ENCODE measurements at regions of chr18 and their contacts with region 1.

Region 1: DNA sequence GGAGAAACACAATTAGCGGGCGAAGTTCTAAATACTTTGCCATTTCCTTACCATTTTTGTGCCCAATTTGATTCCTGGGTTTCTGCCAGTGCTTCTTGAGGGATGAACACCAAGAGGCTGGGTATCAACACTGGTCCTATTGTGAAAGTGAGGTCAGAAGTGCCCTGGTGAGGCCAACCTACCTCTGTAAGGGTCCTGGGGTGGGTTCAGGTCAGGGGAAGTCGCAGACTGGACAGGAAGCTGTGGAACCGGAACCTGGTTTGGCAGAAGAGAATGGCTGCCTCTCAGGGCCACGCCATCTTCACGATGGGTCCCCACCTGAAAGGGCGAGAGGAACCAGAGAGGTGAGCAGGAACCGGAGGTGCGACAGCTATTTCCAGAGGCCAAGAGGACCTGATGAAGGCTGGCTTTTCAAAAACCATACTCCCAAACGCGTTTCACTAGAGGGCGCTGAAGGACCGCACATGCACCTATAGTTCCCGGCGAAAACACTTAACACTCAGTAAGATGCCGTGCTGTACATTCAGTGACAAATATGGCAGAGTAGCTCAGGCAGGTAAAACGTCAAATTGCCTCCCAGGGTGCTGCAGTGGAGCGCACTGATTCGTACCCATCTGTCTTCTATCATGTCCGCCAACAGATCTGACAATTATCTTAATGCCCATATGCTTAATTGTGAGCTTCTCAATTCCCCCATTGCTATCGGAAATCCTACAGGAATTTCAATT is 275.3 kb upstream of the CCDC68 start:
- DNase-seq: peak; percentile 57
- H3K4me3 Mint-ChIP-seq: no peak overlapping the region
- H3K27ac Mint-ChIP-seq: no peak overlapping the region
- H3K4me1 Mint-ChIP-seq: peaks cover 13% of the 10 kb centered on the region
- H3K27me3 Mint-ChIP-seq: no peaks in the 10 kb centered on the region

Region 2: GRCh38 chr18:55173291-55173690 is 61.2 kb before region 1 on chr18:
- intact Hi-C with region 1: no loop called
- DNase-seq: no peak
- H3K4me3 Mint-ChIP-seq: no peak overlapping the region
- H3K27ac Mint-ChIP-seq: no peak overlapping the region
- H3K4me1 Mint-ChIP-seq: no peaks in the 10 kb centered on the region
- H3K27me3 Mint-ChIP-seq: no peaks in the 10 kb centered on the region

Region 3: DNA sequence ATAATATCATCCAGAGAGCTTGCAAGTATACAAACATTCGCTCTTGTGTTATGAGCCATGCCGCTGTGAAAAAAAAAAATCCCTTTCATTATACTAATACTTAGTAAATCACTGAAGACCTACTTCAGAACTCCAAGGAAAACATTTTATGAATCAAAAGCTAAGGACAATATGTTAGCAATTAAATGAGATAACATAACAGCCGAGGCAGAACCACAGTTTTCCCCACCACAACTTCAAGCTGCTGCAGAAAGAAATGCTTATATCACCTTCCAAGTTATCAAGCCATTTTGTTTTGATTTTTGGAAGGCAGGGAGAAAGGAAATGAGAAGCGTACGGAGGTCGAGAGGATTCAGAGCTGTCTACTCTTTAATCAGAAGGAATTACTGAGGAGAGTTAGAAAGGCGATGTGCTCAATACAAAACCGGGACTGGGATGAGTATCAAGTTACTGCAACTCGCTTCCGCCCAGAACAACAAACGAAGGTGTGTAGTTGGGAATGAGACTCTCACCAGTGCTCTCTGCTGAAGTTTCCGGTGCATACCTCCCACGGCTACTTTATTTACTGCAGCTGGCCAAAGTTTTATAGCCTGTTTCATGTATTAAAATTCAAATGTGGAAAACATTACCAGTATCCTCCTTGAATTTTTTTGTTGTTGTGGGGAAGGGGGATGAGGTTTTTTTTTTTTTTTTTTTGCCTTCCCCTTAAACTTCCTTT is 16.9 kb after region 1 on chr18:
- intact Hi-C with region 1: loop called (anchors 1 kb)
- DNase-seq: no peak
- H3K4me3 Mint-ChIP-seq: no peak overlapping the region
- H3K27ac Mint-ChIP-seq: no peak overlapping the region
- H3K4me1 Mint-ChIP-seq: peaks cover 45% of the 10 kb centered on the region
- H3K27me3 Mint-ChIP-seq: no peaks in the 10 kb centered on the region

Region 4: DNA sequence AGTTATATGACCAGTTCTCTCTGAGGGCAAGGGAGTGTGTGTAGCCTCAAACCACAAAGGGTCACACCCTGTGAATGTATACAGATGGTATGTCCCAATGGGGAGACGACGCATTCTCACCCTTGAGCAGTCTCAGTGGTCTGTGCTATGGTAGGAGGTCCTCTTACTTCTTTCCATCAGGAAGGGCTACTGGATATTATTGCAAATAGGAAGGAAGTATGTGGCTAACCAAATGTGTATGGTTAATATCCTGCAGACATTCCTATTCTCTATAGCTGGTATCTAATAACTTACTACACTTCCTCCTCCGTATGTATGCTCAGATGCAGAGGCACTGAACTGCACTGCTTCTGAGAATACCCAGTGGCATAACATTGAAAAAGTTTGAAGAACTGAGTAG is 31.5 kb after region 1 on chr18:
- intact Hi-C with region 1: no loop called
- DNase-seq: no peak
- H3K4me3 Mint-ChIP-seq: no peak overlapping the region
- H3K27ac Mint-ChIP-seq: no peak overlapping the region
- H3K4me1 Mint-ChIP-seq: peaks cover 24% of the 10 kb centered on the region
- H3K27me3 Mint-ChIP-seq: no peaks in the 10 kb centered on the region

Region 5: DNA sequence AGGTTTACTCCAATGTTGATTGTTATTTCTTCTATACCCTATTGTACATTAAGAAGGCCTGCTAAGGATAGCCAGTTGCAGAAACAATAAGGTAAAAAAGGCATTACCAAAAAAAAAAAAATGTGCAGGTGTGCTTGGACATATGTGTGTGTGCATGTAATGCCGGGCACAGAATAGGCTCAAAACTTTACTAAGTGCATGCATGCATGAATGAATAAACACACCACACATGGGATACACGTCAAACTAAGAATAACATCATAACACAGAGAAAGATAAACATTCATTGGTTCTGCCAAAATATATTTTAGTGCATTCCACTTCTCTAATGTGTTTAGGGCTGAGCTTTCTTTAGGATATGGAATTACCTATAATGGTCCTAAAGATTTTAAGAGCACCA is 55.2 kb after region 1 on chr18:
- intact Hi-C with region 1: no loop called
- DNase-seq: no peak
- H3K4me3 Mint-ChIP-seq: no peak overlapping the region
- H3K27ac Mint-ChIP-seq: no peak overlapping the region
- H3K4me1 Mint-ChIP-seq: no peaks in the 10 kb centered on the region
- H3K27me3 Mint-ChIP-seq: peaks cover 8% of the 10 kb centered on the region

Region 6: GRCh38 chr18:55322178-55322735 is 87.7 kb after region 1 on chr18:
- intact Hi-C with region 1: loop called (anchors 5 kb)
- DNase-seq: no peak
- H3K4me3 Mint-ChIP-seq: peak overlapping the region; percentile 72
- H3K27ac Mint-ChIP-seq: no peak overlapping the region
- H3K4me1 Mint-ChIP-seq: peaks cover 3% of the 10 kb centered on the region
- H3K27me3 Mint-ChIP-seq: peaks cover 48% of the 10 kb centered on the region

Region 7: DNA sequence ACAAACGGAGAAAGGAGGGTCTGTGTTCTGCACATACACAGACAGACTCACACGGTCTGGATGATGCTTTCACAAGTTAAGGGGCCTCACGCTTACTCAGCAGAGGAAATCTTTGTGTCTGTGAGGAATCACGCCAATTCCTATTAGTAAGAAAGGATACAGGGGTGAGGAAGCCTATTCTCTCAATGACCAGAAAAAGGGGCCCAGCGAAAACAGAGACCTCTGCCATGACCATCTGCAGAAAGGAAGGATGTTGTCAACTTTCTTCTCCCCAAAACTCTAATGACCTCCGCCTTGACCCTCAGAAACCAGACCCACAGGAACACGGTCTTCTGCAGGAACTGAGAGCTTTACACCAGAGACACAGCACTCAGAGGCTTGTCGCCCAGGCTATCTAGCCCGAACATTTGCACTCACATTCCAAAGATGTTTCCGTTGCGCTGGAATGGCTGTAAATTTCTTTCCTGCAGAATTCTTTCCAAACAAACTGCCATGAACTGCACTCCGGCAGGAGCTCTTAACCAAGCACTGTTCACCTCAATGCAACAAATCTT is 167.2 kb after region 1 on chr18:
- intact Hi-C with region 1: loop called (anchors 5 kb)
- DNase-seq: no peak
- H3K4me3 Mint-ChIP-seq: no peak overlapping the region
- H3K27ac Mint-ChIP-seq: no peak overlapping the region
- H3K4me1 Mint-ChIP-seq: peaks cover 8% of the 10 kb centered on the region
- H3K27me3 Mint-ChIP-seq: peaks cover 1% of the 10 kb centered on the region

Region 8: DNA sequence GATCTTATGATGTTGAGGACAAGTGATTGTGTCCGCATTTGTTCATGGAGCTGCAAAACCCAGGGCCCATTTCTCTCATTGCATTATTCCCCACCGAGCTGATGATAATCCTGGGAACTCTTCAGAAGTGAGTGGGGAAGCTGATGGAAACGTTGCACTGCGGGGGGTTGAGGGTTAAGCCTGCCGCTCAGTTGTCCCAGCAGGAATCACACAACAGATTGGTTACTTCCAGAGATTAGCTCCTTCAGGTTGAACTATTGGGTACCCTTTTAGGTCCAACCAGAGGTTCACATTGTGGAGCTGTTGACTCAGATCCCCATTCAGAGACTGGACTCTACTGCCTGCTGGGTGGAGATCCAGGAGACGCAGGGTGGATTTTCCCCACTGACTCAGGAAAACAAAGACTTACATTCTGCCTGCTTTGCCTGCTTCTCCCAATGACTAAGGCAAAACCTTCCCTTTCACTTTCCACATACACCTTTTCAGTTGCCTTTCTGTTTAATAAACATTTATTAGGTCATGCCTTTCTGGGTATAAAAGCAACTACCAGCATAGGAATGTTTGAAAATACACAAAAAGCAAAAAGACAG is 1117.5 kb after region 1 on chr18:
- intact Hi-C with region 1: no loop called
- DNase-seq: no peak
- H3K4me3 Mint-ChIP-seq: no peak overlapping the region
- H3K27ac Mint-ChIP-seq: no peak overlapping the region
- H3K4me1 Mint-ChIP-seq: no peaks in the 10 kb centered on the region
- H3K27me3 Mint-ChIP-seq: no peaks in the 10 kb centered on the region

Region 9: GRCh38 chr18:56575819-56576663 is 1341.5 kb after region 1 on chr18:
- intact Hi-C with region 1: loop called (anchors 5 kb)
- DNase-seq: no peak
- H3K4me3 Mint-ChIP-seq: no peak overlapping the region
- H3K27ac Mint-ChIP-seq: no peak overlapping the region
- H3K4me1 Mint-ChIP-seq: peaks cover 6% of the 10 kb centered on the region
- H3K27me3 Mint-ChIP-seq: peaks cover 9% of the 10 kb centered on the region

Measured in activated T-helper 2 cell treated with anti-CD3 and anti-CD28 coated beads, Interferon-gamma antibody, Interleukin-2, Interleukin-4, amounts not matched to agents 10 μg/mL and 5 μg/mL and 100 μg/mL, durations not matched to agents 14 hours and 24 hours and 36 hours (primary cell).